ENCODE measurements at regions of chr16 and their contacts with region 1.

Region 1: DNA sequence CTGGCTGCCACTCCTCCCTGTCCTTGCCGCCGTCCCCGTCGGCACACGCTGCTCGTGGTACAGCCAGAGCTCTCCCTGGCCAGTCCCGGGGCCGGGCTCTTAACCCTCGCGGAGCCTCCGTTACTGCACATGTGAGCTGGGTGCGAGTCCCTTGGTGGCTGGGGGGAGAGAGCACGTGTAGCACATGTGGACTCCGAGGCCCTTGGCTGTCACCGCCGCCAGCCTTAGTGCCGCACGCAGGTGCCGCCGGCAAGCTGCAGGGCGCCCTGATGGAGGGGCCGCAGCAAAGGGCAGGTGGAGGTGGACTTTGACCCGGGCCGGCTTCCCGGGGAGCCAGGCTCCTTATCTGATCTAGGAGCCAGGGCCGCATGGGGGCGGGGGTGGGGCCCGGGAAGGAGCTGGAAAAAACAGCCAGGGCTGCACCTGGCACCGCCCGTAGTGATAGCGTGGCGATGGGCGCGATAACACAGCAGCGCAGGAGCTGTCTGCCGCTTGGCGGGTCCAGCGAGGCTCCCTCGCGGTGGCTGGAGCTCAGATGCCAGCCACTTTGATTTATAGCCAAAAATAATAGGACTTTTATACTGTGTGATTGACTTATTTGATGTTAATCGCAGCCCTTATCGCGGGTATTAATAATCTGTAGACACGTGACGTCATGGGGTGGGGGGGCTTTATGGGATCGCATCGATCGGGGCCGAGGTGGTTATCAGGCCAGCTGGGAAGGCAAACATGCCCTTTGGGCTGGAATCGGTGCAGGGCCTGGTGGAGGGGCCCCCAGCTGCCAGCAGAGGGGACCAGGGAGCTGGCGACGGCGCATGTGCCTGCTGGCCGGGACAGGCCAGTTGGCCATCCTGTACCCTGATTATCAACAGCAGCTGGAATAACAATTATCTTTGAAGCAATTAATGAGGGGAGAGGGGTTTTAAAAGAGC is 35.1 kb downstream of the ZFPM1 start:
- DNase-seq: peak; percentile 92
- ATAC-seq: peak; percentile 85
- H3K4me3 ChIP-seq: peak overlapping the region in 1 of 3 experiments; percentile 37; a peak in 1 of 6 replicates
- H3K27ac ChIP-seq: peak overlapping the region; percentile 95
- H3K4me1 ChIP-seq: peaks cover 36% of the 10 kb centered on the region
- H3K27me3 ChIP-seq: no peaks in the 10 kb centered on the region
- CTCF ChIP-seq: peak; percentile 95
- EP300 ChIP-seq: peak in 1 of 2 experiments; percentile 87; a peak in 3 of 4 replicates
- POLR2A ChIP-seq: peak; percentile 9 to 34; a peak in 2 of 4 replicates
- RAD21 ChIP-seq: peak; percentile 98

Region 2: DNA sequence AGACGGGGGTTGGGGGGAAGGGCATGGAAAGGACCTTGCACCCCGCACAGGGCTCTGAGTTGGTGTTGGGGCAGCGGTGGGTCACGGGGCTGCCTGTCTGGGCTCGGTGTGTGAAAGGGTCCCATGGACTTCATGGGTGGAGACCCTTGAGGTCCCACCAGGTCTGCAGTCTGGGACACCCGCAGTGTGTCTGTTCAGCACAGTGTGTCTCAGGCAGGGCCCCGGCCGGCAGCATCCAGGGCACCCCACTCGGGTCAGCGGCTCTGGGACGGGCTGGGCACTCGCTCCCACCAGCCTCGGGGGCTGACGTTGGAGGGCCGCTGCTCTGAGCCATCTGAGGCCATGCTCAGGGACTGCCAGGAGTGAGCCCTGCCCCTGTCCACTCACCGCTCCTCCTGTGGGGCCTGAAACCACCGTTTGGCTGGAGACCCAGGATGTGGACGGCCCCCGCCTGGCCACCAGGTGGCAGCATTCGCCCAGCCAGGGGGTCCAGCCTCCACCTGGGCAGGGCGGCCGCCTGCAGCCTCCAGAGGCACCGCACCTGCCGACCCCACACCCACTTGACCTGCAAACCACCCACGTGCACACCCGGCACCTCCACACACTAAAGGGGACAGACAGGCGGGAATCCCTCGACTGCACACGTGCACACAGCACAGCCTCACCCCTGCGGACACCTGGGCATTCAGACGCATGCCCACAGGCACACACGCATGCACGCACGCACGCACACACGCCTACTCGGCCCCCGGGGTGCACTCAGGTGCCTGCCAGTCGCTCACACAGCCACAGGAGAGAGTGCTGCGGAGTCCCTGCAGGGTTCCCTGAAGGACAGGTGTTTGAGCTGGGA is 45.2 kb before region 1 on chr16:
- CTCF ChIA-PET with region 1: interaction called, 10 read pairs
- POLR2A ChIA-PET with region 1: interaction called, 7 read pairs
- in situ Hi-C with region 1: no loop called
- intact Hi-C with region 1: loop called (anchors 2 kb)
- DNase-seq: peak; percentile 77
- ATAC-seq: peak; percentile 91
- H3K4me3 ChIP-seq: peak overlapping the region; percentile 4 to 66 (median 17); a peak in 3 of 6 replicates
- H3K27ac ChIP-seq: no peak overlapping the region
- H3K4me1 ChIP-seq: peaks cover 16% of the 10 kb centered on the region
- H3K27me3 ChIP-seq: peaks cover 45 to 94% of the 10 kb centered on the region in 2 experiments
- CTCF ChIP-seq: peak; percentile 100
- EP300 ChIP-seq: 0 out of 4 replicates have a peak, but pooled peaks have one; percentile 16 to 20
- POLR2A ChIP-seq: no peak
- RAD21 ChIP-seq: peak; percentile 100

Region 3: DNA sequence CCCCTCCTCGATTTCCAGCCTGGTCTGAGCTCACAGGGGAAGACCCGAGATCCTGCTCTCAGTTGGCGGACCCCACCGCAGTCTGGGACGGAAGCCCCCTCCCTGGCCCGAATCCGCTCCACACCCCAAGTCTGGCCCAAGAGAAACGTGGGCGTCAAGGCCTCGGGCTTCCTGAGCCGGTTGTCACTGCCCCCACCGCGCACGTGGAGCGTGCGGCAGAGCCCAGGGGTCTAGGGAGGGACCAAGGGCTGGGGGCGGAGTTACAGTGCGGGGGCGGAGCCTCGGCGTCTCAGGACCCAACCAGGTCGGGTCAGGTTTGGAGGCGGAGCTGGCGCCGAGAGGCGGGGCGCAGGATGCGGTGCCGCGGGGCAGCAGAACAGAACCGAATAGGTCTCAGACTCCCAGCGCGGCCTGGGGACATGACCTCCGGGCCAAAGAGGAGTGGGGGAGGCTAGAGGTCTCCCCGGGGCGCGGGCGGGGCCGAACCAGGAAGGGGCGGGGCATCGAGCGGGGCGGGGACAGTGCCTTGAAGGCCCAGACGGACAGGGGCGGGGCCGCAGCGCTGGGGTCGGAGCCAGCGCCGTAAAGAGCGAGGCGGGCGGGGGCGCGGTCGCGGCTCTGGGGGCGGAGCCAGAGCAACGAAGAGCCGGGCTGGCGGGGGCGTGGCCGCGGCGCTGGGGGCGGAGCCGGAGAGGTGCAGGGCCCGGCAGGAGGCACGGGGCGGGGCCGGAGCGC is 35.5 kb before region 1 on chr16:
- CTCF ChIA-PET with region 1: interaction called, 7 read pairs
- POLR2A ChIA-PET with region 1: interaction called, 40 read pairs
- in situ Hi-C with region 1: no loop called
- intact Hi-C with region 1: loop called (anchors 1 kb)
- DNase-seq: peak; percentile 92
- ATAC-seq: peak; percentile 76
- H3K4me3 ChIP-seq: peak overlapping the region; percentile 64 to 77 (median 76); a peak in 4 of 6 replicates
- H3K27ac ChIP-seq: peak overlapping the region; percentile 51
- H3K4me1 ChIP-seq: peaks cover 26% of the 10 kb centered on the region
- H3K27me3 ChIP-seq: peaks cover 8 to 45% of the 10 kb centered on the region in 2 experiments; a peak in 4 of 5 replicates
- CTCF ChIP-seq: no peak
- EP300 ChIP-seq: no peak
- POLR2A ChIP-seq: no peak
- RAD21 ChIP-seq: no peak

Region 4: DNA sequence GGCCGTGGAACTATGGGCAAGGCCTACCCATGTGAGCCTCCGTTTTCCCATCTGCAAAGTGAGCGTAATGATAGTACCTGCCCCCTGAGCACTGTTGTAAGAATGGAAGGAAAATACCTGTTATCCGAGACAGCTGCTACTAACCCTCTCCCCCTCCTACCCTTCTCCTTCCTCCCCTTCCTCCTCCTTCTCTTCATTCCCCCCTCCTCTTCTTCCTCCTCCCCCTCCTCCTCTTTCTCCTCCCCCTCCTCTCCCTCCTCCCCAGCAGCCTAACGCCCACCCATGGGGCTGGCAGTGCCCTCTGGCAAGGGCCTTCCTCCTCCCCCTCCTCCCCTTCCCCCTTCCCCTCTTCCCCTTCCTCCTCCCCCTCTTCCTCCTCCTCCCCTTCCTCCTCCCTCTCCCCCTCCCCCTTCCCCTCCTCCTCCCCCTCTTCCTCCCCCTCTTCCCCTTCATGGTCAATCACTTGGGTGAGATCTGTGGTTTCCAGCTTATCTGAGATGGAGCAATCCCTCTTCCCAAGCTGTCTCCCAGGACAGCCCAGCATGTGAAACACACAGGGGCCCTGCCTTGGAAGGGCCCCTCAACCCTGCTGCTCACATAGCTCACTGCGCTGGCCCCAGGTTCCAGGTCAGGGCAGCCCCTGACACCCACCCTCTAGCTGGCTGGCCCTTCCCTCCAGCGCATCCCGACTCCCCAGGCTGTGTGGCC is 28.7 kb before region 1 on chr16:
- CTCF ChIA-PET with region 1: interaction called, 7 read pairs
- POLR2A ChIA-PET with region 1: interaction called, 40 read pairs
- in situ Hi-C with region 1: no loop called
- intact Hi-C with region 1: loop called (anchors 1 kb)
- DNase-seq: no peak
- ATAC-seq: no peak
- H3K4me3 ChIP-seq: no peak overlapping the region
- H3K27ac ChIP-seq: no peak overlapping the region
- H3K4me1 ChIP-seq: peaks cover 45% of the 10 kb centered on the region
- H3K27me3 ChIP-seq: no peaks in the 10 kb centered on the region
- CTCF ChIP-seq: no peak
- EP300 ChIP-seq: no peak
- POLR2A ChIP-seq: no peak
- RAD21 ChIP-seq: no peak

Region 5: DNA sequence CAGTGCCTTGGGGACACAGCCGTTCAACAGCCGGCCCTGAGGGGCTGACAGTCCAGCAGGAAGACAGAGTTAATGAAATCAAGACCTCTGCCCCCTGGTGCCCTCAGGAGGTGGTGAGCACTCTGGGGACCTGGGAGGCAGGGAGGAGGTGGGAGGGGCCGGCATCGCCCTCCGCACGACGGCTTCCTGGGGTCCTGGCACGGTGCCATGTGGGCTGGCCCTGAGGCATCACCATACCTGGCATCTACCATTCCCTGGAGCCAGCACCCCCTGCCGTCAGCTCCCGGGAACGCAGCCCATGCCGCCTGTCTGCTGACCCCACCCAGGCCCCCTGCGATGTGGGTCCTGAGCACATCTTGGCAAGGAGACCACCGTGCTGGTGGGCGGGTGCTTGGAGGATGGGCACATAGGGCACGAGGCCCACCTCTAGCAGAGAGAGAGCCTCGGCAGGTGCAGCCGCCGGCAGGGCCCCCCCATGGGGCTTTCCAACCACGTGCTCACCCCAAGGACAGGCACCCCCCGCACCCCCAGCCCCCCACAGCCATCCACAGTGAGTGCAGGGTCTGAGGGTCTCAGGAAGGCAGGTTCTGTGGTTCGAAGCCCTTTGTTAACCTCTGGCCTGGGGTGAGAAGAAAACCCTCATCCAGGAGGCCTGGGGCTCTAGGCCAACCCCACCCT is 17.4 kb after region 1 on chr16:
- CTCF ChIA-PET with region 1: interaction called, 34 read pairs
- POLR2A ChIA-PET with region 1: interaction called, 370 read pairs
- in situ Hi-C with region 1: no loop called
- intact Hi-C with region 1: loop called (anchors 1 kb)
- DNase-seq: peak; percentile 79
- ATAC-seq: peak; percentile 21
- H3K4me3 ChIP-seq: peak overlapping the region; percentile 19 to 56 (median 32); a peak in 4 of 6 replicates
- H3K27ac ChIP-seq: peak overlapping the region; percentile 92
- H3K4me1 ChIP-seq: peaks cover 75% of the 10 kb centered on the region
- H3K27me3 ChIP-seq: no peaks in the 10 kb centered on the region
- CTCF ChIP-seq: peak; percentile 82
- EP300 ChIP-seq: no peak
- POLR2A ChIP-seq: no peak
- RAD21 ChIP-seq: peak; percentile 86

Region 6: DNA sequence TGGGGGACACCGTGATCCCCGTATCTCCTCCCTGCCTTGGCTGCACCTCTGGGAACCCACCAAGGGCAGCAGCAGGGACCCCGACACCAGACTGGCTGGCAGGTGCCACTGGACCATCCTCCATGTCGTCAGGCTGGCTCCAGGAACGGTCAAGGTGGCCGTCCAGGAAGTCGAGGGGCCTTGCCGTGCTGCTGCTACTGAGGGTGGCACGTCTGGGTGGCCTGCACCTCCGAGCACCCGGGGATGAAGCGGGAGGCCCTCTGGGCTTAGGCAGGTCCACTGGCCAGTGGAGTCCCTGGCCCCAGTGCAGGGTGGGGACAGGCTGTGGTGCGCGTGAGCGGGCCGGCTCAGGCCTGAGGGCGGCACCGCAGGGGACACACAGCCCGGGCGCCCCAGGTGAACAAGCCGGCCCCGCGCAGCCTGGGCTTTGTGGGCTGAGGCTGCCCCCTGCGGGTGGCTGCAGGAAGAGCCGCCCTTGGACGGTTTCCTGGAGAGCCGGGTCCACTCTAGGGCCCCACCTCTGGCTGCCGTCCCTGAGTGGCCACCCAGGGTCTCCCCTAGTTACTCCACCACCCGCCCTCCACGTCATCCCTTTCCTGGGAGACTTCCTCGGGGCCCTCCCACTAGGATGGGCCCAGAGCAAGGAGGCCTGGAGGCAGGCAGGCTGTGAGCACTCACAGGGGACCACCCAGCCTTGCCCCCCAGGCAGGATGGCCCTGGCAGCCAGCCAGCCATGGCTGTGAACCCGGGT is 39.2 kb after region 1 on chr16:
- CTCF ChIA-PET with region 1: interaction called, 19 read pairs
- POLR2A ChIA-PET with region 1: interaction called, 4 read pairs
- in situ Hi-C with region 1: no loop called
- intact Hi-C with region 1: loop called (anchors 1 kb)
- DNase-seq: peak; percentile 51
- ATAC-seq: peak; percentile 79
- H3K4me3 ChIP-seq: no peak overlapping the region
- H3K27ac ChIP-seq: no peak overlapping the region
- H3K4me1 ChIP-seq: peaks cover 31% of the 10 kb centered on the region
- H3K27me3 ChIP-seq: no peaks in the 10 kb centered on the region
- CTCF ChIP-seq: peak; percentile 97
- EP300 ChIP-seq: peak in 1 of 2 experiments; percentile 12; a peak in 1 of 4 replicates
- POLR2A ChIP-seq: no peak
- RAD21 ChIP-seq: peak; percentile 100

Region 7: DNA sequence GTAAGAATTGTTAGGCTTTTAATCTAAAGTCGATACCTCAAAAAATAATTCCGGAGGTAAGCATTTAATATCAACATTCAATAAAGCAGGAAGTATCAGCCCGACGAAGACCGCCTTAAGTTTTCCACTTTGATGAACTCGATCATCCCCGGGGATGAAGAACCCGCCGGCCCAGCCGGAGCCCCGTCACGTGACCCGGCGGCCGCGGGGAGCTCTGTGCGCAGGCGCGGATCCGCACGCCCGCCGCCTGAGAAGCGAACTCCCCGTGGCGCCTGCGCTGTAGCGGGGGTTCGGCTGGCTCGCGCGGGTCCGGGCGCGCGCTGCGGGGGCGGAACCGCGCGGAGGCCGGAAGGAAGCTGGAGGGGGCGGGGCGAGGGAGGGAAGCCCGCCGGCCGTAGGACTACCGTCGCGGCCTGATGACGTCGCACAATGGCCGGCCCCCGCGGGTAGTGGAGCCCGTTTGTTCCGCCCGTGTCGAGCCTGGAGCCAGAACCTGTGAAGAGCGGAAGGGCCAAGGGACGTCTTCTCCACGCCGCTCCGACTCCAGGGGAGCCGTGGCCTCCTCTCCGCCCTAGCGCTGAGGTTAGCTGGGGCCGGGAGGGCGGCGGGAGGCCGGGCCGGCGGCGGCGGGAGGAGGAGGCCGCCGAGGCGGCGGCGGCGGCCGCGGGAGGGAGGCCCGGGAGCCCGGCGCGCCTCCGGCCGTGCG is 82.0 kb after region 1 on chr16 and contains the start of gene ZC3H18:
- CTCF ChIA-PET with region 1: no interaction called
- POLR2A ChIA-PET with region 1: interaction called, 12 read pairs
- in situ Hi-C with region 1: no loop called
- intact Hi-C with region 1: no loop called
- DNase-seq: peak; percentile 91
- ATAC-seq: peak; percentile 83
- H3K4me3 ChIP-seq: peak within 1 kb of the TSS; percentile 92 to 100 (median 93)
- H3K27ac ChIP-seq: peak within 1 kb of the TSS; percentile 73
- H3K4me1 ChIP-seq: peaks cover 28% of the 10 kb centered on the region
- H3K27me3 ChIP-seq: no peaks in the 10 kb centered on the region; a peak in 1 of 5 replicates
- CTCF ChIP-seq: no peak
- EP300 ChIP-seq: no peak
- POLR2A ChIP-seq: peak; percentile 80 to 89
- RAD21 ChIP-seq: peak; percentile 11
- total RNA-seq, gene ZC3H18: 19.7 and 27.4 TPM in 2 replicates

Region 8: DNA sequence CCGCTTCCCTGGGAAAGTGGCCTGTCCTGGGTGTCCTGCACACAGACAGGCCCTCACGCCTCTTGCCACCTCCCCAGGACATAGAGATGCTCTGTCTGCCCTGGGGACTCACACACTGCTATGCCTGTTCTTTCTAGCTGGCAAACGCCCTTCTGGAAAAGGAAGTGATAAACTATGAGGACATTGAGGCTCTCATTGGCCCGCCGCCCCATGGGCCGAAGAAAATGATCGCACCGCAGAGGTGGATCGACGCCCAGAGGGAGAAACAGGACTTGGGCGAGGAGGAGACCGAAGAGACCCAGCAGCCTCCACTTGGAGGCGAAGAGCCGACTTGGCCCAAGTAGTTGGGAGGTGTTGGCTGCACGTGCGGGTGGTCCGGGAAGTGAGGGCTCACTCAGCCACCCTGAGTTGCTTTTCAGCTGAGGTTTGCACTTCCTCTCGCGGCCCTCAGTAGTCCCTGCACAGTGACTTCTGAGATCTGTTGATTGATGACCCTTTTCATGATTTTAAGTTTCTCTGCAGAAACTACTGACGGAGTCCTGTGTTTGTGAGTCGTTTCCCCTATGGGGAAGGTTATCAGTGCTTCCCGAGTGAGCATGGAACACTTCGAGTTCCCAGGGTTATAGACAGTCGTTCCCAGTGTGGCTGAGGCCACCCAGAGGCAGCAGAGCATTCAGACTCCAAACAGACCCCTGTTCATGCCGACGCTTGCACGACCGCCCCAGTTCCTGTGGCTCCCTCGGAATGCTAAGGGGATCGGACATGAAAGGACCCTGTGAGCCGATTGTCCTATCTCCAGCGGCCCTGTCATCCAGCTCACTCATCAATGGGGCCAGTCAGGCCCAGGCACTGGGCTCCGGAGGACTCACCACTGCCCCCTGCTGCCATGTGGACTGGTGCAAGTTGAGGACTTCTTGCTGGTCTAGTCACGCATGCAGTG is 1068.8 kb after region 1 on chr16:
- CTCF ChIA-PET with region 1: no interaction called
- POLR2A ChIA-PET with region 1: no interaction called
- in situ Hi-C with region 1: no loop called
- intact Hi-C with region 1: no loop called
- DNase-seq: peak; percentile 90
- ATAC-seq: peak; percentile 79
- H3K4me3 ChIP-seq: no peak overlapping the region
- H3K27ac ChIP-seq: peak overlapping the region; percentile 49
- H3K4me1 ChIP-seq: peaks cover 34% of the 10 kb centered on the region
- H3K27me3 ChIP-seq: no peaks in the 10 kb centered on the region
- CTCF ChIP-seq: peak; percentile 97
- EP300 ChIP-seq: no peak
- POLR2A ChIP-seq: 0 out of 4 replicates have a peak, but pooled peaks of 1 of the 2 experiments have one; percentile 28
- RAD21 ChIP-seq: peak; percentile 91

Measured in HepG2 (cell line).